ENCODE measurements at regions of chr20 and their contacts with region 1.

Region 1: DNA sequence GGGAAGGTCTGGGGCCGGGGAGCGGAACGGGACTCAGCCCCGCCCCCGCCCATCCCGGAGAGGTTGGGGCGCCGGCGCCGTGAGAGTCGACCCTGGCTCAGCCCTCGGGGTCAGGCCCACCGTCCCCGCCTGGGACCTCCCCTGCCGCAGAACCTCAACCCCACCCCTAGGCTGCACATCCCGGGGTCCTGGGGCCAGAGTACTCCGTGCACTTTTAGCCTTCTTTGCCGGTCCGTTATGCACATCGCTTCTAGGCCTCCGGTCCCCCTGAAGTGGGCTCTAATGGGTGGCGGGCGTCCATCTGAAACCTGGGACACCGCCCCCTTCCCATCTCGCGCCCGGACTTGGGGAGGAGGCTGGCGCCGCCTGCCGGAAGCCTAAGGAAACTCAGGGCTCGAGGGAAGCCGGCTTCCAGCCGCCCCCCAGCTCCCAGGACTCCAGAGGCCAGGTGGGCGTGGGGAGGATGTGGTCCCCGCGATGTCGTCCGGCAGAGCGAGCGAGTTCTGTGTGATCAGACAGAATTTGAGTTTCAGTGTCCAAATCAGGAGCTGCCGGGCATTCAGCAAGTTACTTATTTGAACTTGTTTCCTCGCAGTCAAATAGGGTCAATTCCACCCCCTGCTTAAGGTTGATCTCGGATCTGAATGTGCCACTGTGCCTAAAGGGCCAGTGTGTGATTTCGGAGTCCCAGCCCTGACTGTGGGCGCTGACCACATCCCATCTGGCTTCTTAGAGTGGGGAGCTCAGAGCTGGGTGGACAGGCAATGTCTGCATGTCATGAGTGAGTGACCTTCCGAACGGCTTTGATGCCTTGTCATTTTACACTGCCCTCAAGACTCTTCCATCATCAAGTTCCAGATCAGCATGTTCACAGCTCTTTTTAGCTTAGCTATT is 47.6 kb downstream of the CPXM1 start:
- DNase-seq: no peak
- ATAC-seq: no peak

Region 2: DNA sequence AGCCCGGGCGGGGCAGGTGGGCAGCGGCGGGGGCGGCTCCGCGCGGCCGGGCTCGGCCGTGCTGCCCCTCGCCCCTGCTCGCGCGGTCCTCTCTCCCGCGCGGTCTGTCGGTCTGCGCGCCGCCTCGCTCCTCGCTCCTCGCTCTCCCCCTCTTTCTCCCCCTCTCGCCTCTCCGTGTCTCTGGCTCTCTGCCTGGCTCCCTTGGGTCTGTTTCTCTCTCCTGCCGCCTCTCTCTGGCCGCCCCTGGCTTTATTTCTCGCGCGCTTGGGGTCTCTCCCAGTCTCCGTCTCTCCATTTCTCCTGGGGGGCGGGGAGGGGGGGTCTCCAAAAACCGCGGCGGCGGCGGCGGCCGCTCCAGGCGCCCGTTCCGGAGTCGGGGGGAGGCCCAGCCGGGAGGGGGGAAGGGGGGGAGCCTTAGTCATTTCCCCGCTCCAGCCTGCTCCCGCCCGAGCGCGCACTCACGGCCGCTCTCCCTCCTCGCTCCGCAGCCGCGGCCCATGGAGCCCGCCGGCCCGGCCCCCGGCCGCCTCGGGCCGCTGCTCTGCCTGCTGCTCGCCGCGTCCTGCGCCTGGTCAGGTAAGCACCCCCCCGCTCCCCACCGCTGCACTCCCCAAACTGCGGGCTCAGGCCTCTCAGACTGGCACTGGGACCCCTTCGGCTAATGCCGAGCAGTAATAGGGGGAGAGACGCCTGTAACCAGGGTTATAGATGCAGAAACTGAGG is 857.7 kb before region 1 on chr20 and contains the start of gene SIRPA:
- intact Hi-C with region 1: no loop called
- DNase-seq: peak; percentile 83
- ATAC-seq: peak; percentile 61
- total RNA-seq, gene SIRPA: 20.9 TPM

Region 3: DNA sequence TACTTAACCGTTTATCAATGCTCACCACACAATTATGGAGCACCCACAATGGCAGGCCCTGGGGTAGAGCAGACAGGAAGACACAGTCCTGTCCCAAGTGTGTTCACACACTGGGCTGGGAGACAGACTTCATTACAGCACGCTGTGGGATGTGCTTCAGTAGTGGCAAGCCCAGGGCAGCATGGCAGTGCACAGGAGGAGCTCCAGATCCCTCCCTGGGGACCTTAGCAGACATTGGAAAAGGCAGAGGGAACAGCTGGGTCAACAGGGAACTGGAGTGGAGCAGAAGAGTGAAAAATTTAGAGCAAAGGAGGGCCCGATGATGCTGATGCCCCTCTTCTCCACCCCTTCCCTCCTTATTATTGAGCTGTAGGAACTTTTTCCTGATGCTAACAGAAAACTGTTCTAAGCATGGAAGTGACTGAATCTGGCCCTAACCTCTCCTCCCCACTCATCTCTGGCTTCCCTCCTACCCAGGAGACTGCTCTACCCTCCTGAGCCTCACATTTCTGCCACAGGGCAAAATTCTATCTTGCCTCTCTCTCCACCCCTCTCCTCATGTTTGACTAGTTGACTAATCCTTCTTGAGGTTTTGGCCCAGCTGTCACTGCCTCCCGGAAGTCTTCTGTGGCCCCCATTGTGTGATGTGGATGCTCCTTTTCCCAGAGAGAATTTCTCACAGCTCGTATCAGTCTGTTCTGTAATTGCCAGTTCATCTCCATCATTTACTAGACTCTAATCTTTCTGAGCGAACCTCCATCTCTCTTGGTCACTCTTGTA is 141.7 kb before region 1 on chr20:
- intact Hi-C with region 1: no loop called
- DNase-seq: no peak
- ATAC-seq: no peak

Region 4: GRCh38 chr20:2840138-2840966 is 87.5 kb after region 1 on chr20 and contains the starts of genes PCED1A and VPS16:
- intact Hi-C with region 1: loop called (anchors 5 kb)
- DNase-seq: peak; percentile 92
- ATAC-seq: peak; percentile 98
- total RNA-seq, gene PCED1A: 10.7 TPM
- total RNA-seq, gene VPS16: 18.0 TPM

Region 5: DNA sequence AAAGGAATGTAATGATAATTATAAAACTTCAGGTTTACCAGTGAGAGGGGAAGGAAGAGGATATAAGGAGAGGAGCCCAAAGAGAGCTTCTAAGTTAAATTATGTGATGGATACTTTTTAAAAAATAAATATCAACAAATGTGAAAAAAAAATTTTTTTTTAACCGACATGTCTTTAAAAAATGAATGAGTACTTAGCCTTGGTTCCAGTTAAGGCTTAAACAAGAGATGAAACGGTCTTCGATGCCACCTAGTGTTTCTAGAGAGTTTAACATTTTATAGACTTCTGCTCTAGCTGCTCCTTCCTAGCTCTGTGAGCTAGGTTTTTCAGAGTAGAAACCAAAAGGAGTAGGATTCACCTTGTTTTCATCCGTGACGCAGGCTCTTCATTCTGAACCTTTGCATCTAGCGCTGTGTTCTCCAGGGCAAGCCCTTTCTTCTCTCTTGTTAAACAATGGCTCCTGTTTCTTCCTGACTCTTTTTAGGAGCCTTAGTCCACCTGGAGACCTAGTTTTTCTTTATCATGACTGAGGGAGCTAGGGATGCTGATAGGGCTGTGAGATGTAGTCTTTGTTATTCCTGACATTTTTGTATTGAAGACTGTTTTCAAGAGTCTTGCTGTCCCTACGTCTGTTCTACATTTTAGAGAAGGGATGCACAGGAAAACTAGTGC is 248.2 kb after region 1 on chr20:
- intact Hi-C with region 1: loop called (anchors 5 kb)
- DNase-seq: no peak
- ATAC-seq: no peak